HepG2 (cell line): ENCODE measurements at regions of chr4 and their contacts with region 1.

Region 1: DNA sequence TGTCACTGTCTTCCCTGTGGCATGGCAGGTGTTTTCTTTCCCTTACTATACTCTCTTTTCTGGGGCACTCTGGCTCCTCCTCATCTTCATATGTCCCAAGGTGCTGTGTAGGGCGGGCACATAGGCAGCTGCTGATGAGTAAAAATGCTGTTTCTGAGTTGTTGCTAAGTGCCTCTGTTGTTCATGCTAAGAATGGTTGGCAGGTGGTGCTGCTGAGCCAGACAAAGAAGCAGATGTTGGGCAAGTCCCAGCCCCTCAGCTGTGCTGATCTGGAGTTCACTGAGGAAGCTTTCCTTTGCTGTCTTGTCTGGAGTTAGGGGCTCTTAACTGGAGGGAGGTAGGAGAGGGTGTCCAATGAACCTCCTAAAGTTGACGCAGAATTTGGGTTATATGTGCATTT is 40.6 kb downstream of the HADH start:
- DNase-seq: peak; percentile 30
- ATAC-seq: peak; percentile 96
- H3K4me3 ChIP-seq: no peak overlapping the region
- H3K27ac ChIP-seq: no peak overlapping the region
- H3K4me1 ChIP-seq: no peaks in the 10 kb centered on the region
- H3K27me3 ChIP-seq: no peaks in the 10 kb centered on the region
- CTCF ChIP-seq: peak; percentile 74
- EP300 ChIP-seq: no peak
- POLR2A ChIP-seq: no peak
- RAD21 ChIP-seq: peak; percentile 45; the same call in 1 of the 2 replicates

Region 2: DNA sequence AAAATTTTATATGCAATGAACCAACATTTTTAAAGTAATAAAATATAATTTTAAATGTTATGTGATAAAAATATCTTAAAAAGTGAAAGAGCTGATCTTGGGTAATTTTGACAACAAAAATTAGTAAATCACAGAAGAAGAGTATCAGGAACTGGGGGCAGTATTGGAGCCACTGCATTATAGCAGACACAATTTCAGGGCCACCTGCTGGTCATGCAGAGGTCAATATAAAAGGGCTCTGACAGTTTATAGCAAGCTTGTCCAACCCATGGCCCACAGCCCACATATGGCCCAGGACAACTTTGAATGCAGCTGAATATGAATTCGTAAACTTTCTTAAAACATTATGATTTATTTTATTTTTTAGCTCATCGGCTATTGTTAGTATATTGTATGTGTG is 151.4 kb after region 1 on chr4:
- CTCF ChIA-PET with region 1: interaction called, 5 read pairs
- POLR2A ChIA-PET with region 1: no interaction called
- in situ Hi-C with region 1: no loop called
- intact Hi-C with region 1: loop called (anchors 1 kb)
- DNase-seq: peak; percentile 16
- ATAC-seq: peak; percentile 91
- H3K4me3 ChIP-seq: no peak overlapping the region
- H3K27ac ChIP-seq: no peak overlapping the region
- H3K4me1 ChIP-seq: no peaks in the 10 kb centered on the region
- H3K27me3 ChIP-seq: no peaks in the 10 kb centered on the region
- CTCF ChIP-seq: peak; percentile 32; the same call in 1 of the 2 replicates
- EP300 ChIP-seq: no peak
- POLR2A ChIP-seq: no peak
- RAD21 ChIP-seq: no peak

Region 3: GRCh38 chr4:108492816-108493595 is 462.7 kb after region 1 on chr4:
- CTCF ChIA-PET with region 1: no interaction called
- POLR2A ChIA-PET with region 1: no interaction called
- in situ Hi-C with region 1: loop called (anchors 25 kb)
- intact Hi-C with region 1: no loop called
- DNase-seq: peak; percentile 16
- ATAC-seq: peak; percentile 93
- H3K4me3 ChIP-seq: no peak overlapping the region
- H3K27ac ChIP-seq: no peak overlapping the region
- H3K4me1 ChIP-seq: no peaks in the 10 kb centered on the region
- H3K27me3 ChIP-seq: no peaks in the 10 kb centered on the region
- CTCF ChIP-seq: peak; percentile 76
- EP300 ChIP-seq: no peak
- POLR2A ChIP-seq: no peak
- RAD21 ChIP-seq: peak; percentile 46; the same call in 1 of the 2 replicates

Region 4: DNA sequence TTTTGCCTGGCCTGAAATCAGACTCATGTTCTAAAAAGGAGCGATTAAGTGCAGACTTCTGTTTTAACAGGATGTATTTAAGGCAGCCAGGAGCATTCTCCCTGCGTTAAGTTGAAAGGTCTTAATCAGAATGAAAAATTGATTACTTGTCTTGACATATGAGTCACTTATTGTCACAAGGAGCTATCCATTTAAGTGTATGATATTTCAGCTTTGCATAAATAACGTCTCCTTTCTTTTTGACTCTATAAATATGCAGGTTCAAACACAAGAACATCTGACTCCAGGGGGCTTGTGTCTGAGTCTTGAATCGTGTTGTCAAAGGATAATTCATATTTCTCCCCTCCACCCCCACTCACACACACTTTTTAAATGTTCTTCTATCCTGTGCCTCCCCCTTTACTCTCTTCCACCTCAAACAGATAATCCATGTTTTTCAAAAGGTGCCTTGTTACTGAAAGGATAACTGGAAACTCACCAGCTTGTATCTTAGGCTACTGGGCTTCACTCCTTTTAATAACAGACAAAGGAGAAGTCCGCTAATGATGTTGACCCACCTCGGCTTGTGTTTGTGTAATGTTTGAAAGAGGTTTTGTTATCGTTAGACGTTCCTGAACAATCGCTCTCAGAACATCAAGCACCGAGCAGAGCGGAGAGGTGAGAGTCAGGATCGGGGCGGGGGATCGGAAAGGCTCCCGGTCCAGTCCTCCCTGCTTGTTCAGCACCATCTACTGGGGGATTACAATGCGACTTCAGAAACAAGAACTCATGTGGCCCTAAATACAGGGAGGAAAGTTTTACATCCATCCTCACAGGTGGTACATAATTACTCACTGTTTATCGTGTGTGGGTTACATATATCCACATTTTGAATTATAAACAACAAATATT is 482.5 kb after region 1 on chr4:
- CTCF ChIA-PET with region 1: no interaction called
- POLR2A ChIA-PET with region 1: no interaction called
- in situ Hi-C with region 1: no loop called
- intact Hi-C with region 1: loop called (anchors 5 kb)
- DNase-seq: peak; percentile 29
- ATAC-seq: peak; percentile 92
- H3K4me3 ChIP-seq: no peak overlapping the region
- H3K27ac ChIP-seq: no peak overlapping the region
- H3K4me1 ChIP-seq: no peaks in the 10 kb centered on the region
- H3K27me3 ChIP-seq: peaks cover 0 to 10% of the 10 kb centered on the region in 2 experiments; a peak in 2 of 5 replicates
- CTCF ChIP-seq: peak; percentile 55
- EP300 ChIP-seq: no peak
- POLR2A ChIP-seq: no peak
- RAD21 ChIP-seq: no peak

Region 5: DNA sequence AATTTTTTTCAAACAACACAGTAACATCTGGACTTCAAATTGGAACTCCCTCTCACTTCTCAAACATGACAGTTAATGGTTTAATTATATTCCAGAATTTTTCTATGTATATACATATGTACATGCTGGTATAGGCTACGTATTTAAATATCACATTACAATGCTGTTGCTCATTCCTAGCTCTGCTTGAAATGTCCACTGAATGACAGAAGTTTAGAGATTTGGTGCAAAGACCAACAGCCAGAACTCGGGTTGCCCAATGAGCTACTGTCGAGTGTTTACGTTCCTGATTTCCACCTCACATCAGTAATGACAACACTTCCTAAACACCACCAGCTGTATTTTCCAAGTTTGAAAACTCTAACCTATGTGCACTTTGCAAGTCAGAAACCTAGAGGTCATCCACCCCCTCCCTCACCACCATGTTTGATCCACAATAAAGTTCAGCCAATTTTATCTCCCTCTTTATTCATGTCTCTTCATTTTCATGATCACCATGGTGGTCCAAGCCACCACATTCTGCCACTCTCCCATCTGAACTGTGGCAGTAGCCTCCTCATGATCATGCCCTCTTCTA is 540.7 kb after region 1 on chr4:
- CTCF ChIA-PET with region 1: interaction called, 15 read pairs
- POLR2A ChIA-PET with region 1: no interaction called
- in situ Hi-C with region 1: no loop called
- intact Hi-C with region 1: loop called (anchors 1 kb)
- DNase-seq: no peak
- ATAC-seq: peak; percentile 54; the same call in 2 of the 3 replicates
- H3K4me3 ChIP-seq: no peak overlapping the region
- H3K27ac ChIP-seq: no peak overlapping the region
- H3K4me1 ChIP-seq: no peaks in the 10 kb centered on the region
- H3K27me3 ChIP-seq: no peaks in the 10 kb centered on the region
- CTCF ChIP-seq: no peak
- EP300 ChIP-seq: no peak
- POLR2A ChIP-seq: no peak
- RAD21 ChIP-seq: no peak